Dorsolateral prefrontal cortex (tissue), 120 donors: ENCODE measurements at regions of chr9 and their contacts with region 1.

Region 1: GRCh38 chr9:89549031-89549644 is 51.2 kb upstream of the SEMA4D start:
- DNase-seq: peak in 9 of 10 donors; percentile 61 to 85 (median 75)
- H3K4me3 ChIP-seq: no peak overlapping the region
- H3K27ac ChIP-seq: peak overlapping the region in 30 of 59 donors; percentile 1 to 77 (median 50)
- H3K27me3 ChIP-seq: no peaks in the 10 kb centered on the region
- CTCF ChIP-seq: peak; percentile 58 to 100 (median 94)

Region 2: GRCh38 chr9:89364666-89365531 is 184.2 kb before region 1 on chr9:
- intact Hi-C with region 1: loop called in 1 of 2 experiments (anchors 5 kb)
- DNase-seq: peak in 2 of 10 donors; percentile 22 to 31
- H3K4me3 ChIP-seq: no peak overlapping the region
- H3K27ac ChIP-seq: peak overlapping the region in 17 of 59 donors; percentile 1 to 84 (median 17)
- H3K27me3 ChIP-seq: no peaks in the 10 kb centered on the region
- CTCF ChIP-seq: no peak

Region 3: GRCh38 chr9:89428901-89429890 is 119.9 kb before region 1 on chr9:
- intact Hi-C with region 1: loop called in 1 of 2 experiments (anchors 5 kb)
- DNase-seq: no peak
- H3K4me3 ChIP-seq: peak overlapping the region in 3 of 59 donors; percentile 3 to 28 (median 3)
- H3K27ac ChIP-seq: peak overlapping the region in 57 of 59 donors; percentile 18 to 100 (median 91)
- H3K27me3 ChIP-seq: no peaks in the 10 kb centered on the region
- CTCF ChIP-seq: peak in 39 of 56 donors; percentile 13 to 60 (median 34)

Region 4: GRCh38 chr9:89483592-89484522 is 65.3 kb before region 1 on chr9:
- intact Hi-C with region 1: loop called in 1 of 2 experiments (anchors 5 kb)
- DNase-seq: peak in 2 of 10 donors; percentile 35 to 60
- H3K4me3 ChIP-seq: peak overlapping the region in 36 of 59 donors; percentile 8 to 52 (median 26)
- H3K27ac ChIP-seq: peak overlapping the region; percentile 14 to 95 (median 89)
- H3K27me3 ChIP-seq: no peaks in the 10 kb centered on the region
- CTCF ChIP-seq: no peak